Activated CD8-positive, alpha-beta T cell treated with anti-CD3 and anti-CD28 coated beads for 36 hours (primary cell): ENCODE measurements at regions of chr20 and their contacts with region 1.

Region 1: GRCh38 chr20:35729836-35730582 is 12.1 kb downstream of the RBM39 start:
- DNase-seq: no peak
- ATAC-seq: no peak
- H3K4me3 Mint-ChIP-seq: no peak overlapping the region
- H3K27ac Mint-ChIP-seq: peak overlapping the region; percentile 12
- H3K4me1 Mint-ChIP-seq: peaks cover 53% of the 10 kb centered on the region
- H3K27me3 Mint-ChIP-seq: no peaks in the 10 kb centered on the region
- CTCF ChIP-seq: no peak

Region 2: GRCh38 chr20:35699127-35699975 is 30.7 kb before region 1 on chr20 and contains the starts of genes NFS1 and ROMO1:
- CTCF ChIA-PET with region 1: interaction called, 3 read pairs
- POLR2A ChIA-PET with region 1: interaction called, 1,214 read pairs
- intact Hi-C with region 1: loop called (anchors 5 kb)
- DNase-seq: peak; percentile 93
- ATAC-seq: peak; percentile 90
- H3K4me3 Mint-ChIP-seq: peak within 1 kb of the TSS; percentile 83
- H3K27ac Mint-ChIP-seq: peak within 1 kb of the TSS; percentile 97
- H3K4me1 Mint-ChIP-seq: peaks cover 33% of the 10 kb centered on the region
- H3K27me3 Mint-ChIP-seq: no peaks in the 10 kb centered on the region
- CTCF ChIP-seq: no peak
- total RNA-seq, gene NFS1: 39.7 to 40.8 TPM
- total RNA-seq, gene ROMO1: 146 to 148 TPM

Region 3: DNA sequence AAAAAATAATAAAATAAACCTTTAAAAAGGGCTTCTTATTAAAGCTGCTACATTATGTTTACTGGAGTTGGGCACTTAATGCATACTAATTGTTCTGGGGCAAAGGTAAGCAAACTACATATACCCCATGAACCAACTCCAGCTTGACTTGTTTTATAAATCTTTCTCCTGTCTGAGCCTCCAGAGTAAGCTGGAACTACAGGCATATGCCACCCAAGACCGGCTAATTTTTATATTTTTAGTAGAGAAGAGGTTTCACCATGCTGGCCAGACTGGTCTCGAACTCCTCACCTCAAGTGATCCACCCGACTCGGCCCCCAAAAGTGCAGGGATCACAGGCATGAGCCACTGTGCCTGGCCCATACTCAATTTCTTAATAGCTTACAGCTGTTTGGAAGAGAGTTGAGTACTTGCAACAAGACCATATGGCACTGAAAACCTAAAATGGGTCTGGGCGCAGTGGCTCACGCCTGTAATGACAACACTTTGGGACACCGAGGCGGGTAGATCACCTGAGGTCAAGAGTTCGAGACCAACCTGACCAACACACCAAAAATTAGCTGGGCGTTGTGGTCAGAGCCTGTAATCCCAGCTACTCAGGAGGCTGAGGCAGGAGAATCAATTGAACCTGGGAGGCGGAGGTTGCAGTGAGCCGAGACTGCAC is 10.9 kb before region 1 on chr20:
- CTCF ChIA-PET with region 1: interaction called, 11 read pairs
- POLR2A ChIA-PET with region 1: interaction called, 1,214 read pairs
- intact Hi-C with region 1: no loop called
- DNase-seq: no peak
- ATAC-seq: no peak
- H3K4me3 Mint-ChIP-seq: no peak overlapping the region
- H3K27ac Mint-ChIP-seq: peak overlapping the region; percentile 61
- H3K4me1 Mint-ChIP-seq: peaks cover 51% of the 10 kb centered on the region
- H3K27me3 Mint-ChIP-seq: no peaks in the 10 kb centered on the region
- CTCF ChIP-seq: no peak